CD8-positive, alpha-beta T cell (primary cell): ENCODE measurements at regions of chr7 and their contacts with region 1.

Region 1: DNA sequence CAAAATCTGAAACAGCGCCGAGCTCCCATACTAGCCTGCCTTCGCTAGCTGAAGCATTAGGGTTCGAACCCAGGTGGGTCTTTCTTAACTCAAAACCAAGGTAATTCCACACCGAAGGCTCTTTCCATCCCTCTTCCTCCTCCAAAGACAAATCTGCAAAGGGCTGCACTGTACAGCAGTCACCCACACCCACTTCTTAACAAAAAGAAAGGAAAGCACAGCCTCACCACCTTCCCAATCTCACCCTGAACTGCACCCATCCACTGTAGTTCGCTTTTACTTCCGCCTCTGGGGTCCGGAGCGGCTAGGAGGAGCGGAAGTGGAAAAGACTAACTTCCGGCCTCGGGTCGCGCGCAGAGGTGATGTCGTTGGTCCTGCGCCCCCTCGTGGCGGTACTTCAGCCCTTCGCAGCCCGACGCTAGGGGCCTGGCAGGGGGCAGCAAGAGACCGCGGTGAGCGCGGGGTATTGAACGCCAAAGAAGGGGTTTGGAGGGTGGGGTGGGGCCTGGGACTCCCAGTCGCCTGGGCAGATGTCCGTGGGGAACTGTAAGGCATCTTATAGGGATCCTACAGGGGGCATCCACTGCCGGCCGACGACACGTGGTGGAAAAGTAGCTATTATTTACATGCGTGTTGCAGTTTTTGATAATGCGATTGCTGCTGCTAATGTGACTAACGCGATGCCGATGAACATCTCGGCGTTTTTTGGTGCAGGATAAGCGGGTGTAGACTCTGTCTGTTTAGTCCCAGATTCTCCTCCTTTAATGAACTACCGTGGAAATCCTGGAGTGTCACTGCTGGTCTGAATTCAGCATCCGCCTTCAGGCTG is at the start of gene MTERF1:
- DNase-seq: peak; percentile 82 to 96 (median 95)
- ATAC-seq: peak; percentile 96
- H3K4me3 ChIP-seq: peak within 1 kb of the TSS; percentile 78 to 90
- H3K4me3 Mint-ChIP-seq: peak within 1 kb of the TSS; percentile 94
- H3K27ac ChIP-seq: peak within 1 kb of the TSS; percentile 63 to 77
- H3K27ac Mint-ChIP-seq: peak within 1 kb of the TSS; percentile 97
- H3K4me1 ChIP-seq: peaks cover 21% of the 10 kb centered on the region
- H3K4me1 Mint-ChIP-seq: peaks cover 40% of the 10 kb centered on the region
- H3K27me3 ChIP-seq: no peaks in the 10 kb centered on the region
- H3K27me3 Mint-ChIP-seq: no peaks in the 10 kb centered on the region
- CTCF ChIP-seq: peak; percentile 97
- total RNA-seq, gene MTERF1: 12.3 to 12.5 TPM

Region 2: DNA sequence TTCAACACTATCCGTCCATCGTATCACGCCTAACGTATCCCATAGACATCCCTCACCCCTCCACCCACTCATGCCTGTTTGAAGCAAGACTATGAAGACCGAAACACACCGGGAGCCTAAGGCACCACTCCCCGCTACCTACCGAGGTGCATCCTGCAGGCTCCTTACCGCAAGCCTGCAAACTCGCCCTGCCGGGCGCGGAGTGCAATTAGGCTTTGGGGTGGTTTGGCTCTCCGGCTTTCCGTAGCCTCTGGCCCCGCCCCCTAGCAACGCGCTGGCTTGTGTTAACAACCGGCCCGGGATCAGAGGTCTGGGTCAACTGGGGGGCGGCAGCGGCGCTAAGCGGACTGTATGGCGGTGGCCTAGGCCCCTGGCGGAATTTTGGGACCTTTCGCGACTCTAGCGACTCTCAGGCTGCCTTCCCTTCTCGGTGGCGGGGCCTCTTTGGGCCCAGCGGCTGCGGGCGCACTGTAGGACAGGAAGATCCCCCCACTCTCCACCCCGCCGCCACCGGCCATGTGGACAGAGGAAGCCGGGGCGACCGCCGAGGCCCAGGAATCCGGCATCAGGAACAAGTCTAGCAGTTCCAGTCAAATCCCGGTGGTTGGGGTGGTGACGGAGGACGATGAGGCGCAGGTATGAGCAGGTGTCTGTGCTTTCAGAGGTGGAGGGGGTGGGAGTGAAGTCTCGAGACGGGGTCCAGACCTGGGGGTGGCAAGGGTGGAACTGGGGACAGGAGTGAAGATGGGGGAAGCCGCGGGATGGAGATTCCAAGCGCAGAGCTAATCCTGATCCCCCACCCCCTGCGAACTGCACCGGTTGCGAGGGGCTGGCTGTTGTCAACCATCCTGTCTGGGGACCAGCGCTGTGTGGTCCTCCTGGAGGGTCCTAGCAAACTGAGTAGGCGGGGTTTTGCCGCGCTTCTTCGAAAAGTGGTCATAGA is 1635.4 kb before region 1 on chr7 and contains the start of gene CFAP69:
- CTCF ChIA-PET with region 1: no interaction called
- POLR2A ChIA-PET with region 1: no interaction called
- intact Hi-C with region 1: loop called in 1 of 2 experiments (anchors 5 kb)
- DNase-seq: peak; percentile 71 to 90 (median 84)
- ATAC-seq: peak; percentile 86
- H3K4me3 ChIP-seq: peak within 1 kb of the TSS; percentile 78 to 83
- H3K4me3 Mint-ChIP-seq: peak within 1 kb of the TSS; percentile 92
- H3K27ac ChIP-seq: peak within 1 kb of the TSS in 1 of 2 experiments; percentile 54
- H3K27ac Mint-ChIP-seq: no peak within 1 kb of the TSS
- H3K4me1 ChIP-seq: peaks cover 3% of the 10 kb centered on the region
- H3K4me1 Mint-ChIP-seq: peaks cover 22% of the 10 kb centered on the region
- H3K27me3 ChIP-seq: peaks cover 0 to 9% of the 10 kb centered on the region in 2 experiments
- H3K27me3 Mint-ChIP-seq: peaks cover 54% of the 10 kb centered on the region
- CTCF ChIP-seq: peak; percentile 19
- total RNA-seq, gene CFAP69: not detected

Region 3: GRCh38 chr7:90945104-90945787 is 935.4 kb before region 1 on chr7:
- CTCF ChIA-PET with region 1: no interaction called
- POLR2A ChIA-PET with region 1: no interaction called
- intact Hi-C with region 1: no loop called
- DNase-seq: no peak
- ATAC-seq: no peak
- H3K4me3 ChIP-seq: no peak overlapping the region
- H3K4me3 Mint-ChIP-seq: no peak overlapping the region
- H3K27ac ChIP-seq: no peak overlapping the region
- H3K27ac Mint-ChIP-seq: no peak overlapping the region
- H3K4me1 ChIP-seq: no peaks in the 10 kb centered on the region
- H3K4me1 Mint-ChIP-seq: no peaks in the 10 kb centered on the region
- H3K27me3 ChIP-seq: no peaks in the 10 kb centered on the region
- H3K27me3 Mint-ChIP-seq: no peaks in the 10 kb centered on the region
- CTCF ChIP-seq: no peak

Region 4: GRCh38 chr7:91826377-91826776 is 54.2 kb before region 1 on chr7:
- CTCF ChIA-PET with region 1: interaction called, 9 read pairs
- POLR2A ChIA-PET with region 1: no interaction called
- intact Hi-C with region 1: loop called in 1 of 2 experiments (anchors 1 kb)
- DNase-seq: no peak
- ATAC-seq: no peak
- H3K4me3 ChIP-seq: no peak overlapping the region
- H3K4me3 Mint-ChIP-seq: no peak overlapping the region
- H3K27ac ChIP-seq: no peak overlapping the region
- H3K27ac Mint-ChIP-seq: no peak overlapping the region
- H3K4me1 ChIP-seq: no peaks in the 10 kb centered on the region
- H3K4me1 Mint-ChIP-seq: no peaks in the 10 kb centered on the region
- H3K27me3 ChIP-seq: no peaks in the 10 kb centered on the region
- H3K27me3 Mint-ChIP-seq: no peaks in the 10 kb centered on the region
- CTCF ChIP-seq: no peak

Region 5: DNA sequence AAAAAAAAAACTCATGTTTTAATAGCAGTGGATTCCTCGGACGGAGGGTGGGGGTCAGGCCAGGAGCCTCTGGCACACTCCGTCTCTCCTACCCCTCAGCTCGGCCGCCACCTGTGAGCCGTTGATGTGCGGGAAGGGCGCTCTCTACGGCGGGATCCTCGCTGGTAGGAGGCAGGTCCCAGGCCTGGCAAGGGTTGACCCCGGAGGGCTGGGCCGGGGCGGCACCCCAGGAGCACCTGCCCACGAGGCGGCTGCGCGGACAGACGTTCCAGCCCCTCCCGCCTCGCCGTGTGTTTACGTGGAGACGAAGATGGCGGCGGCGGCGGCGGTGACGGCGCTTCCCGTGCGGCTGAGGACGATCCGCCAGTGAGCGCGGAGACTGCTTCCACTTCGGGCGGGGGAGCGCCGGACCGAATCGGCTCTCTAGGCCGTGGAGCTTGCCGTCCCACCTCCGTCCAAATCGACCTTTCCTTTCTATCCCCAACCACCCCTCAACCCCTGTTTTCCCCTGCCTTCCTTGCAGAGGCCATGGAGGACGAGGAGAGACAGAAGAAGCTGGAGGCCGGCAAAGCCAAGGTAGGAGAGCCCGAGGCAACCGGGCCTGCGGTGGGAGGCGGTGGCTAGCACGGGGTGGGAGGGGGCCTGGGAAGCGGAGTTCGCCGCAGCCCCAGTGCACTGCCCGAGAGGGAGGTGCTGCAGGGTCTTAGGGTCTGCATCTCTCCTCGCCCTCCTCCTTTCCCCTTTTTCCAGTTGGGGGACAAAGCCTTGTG is 60.1 kb after region 1 on chr7 and contains the start of gene AKAP9:
- CTCF ChIA-PET with region 1: interaction called, 18 read pairs
- POLR2A ChIA-PET with region 1: interaction called, 24 read pairs
- intact Hi-C with region 1: loop called (anchors 1 kb)
- DNase-seq: peak; percentile 71 to 93 (median 89)
- ATAC-seq: peak; percentile 84
- H3K4me3 ChIP-seq: peak within 1 kb of the TSS; percentile 78 to 92
- H3K4me3 Mint-ChIP-seq: peak within 1 kb of the TSS; percentile 93
- H3K27ac ChIP-seq: peak within 1 kb of the TSS; percentile 91 to 93
- H3K27ac Mint-ChIP-seq: peak within 1 kb of the TSS; percentile 96
- H3K4me1 ChIP-seq: peaks cover 21% of the 10 kb centered on the region
- H3K4me1 Mint-ChIP-seq: peaks cover 45% of the 10 kb centered on the region
- H3K27me3 ChIP-seq: no peaks in the 10 kb centered on the region
- H3K27me3 Mint-ChIP-seq: no peaks in the 10 kb centered on the region
- CTCF ChIP-seq: no peak
- total RNA-seq, gene AKAP9: 61.2 to 61.3 TPM

Region 6: DNA sequence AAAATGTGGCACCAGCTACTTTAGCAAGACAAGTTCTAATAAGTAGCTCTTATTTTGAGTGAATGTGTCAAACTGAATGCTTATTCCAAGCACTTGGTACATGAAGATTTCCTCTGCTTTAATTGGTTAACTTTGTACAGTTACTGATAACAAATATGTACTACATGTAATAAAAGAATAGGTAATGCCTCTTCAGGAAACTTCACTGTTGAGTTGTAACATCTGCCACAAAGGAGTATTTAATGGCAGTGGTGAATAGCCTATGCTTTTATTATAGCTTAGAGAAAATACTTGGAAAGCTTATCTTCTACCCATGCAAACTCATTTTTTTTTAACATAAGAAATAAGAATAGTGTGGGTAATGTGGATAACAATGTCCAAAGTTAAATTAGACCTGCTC is 171.0 kb after region 1 on chr7:
- CTCF ChIA-PET with region 1: no interaction called
- POLR2A ChIA-PET with region 1: no interaction called
- intact Hi-C with region 1: no loop called
- DNase-seq: no peak
- ATAC-seq: no peak
- H3K4me3 ChIP-seq: no peak overlapping the region
- H3K4me3 Mint-ChIP-seq: no peak overlapping the region
- H3K27ac ChIP-seq: no peak overlapping the region
- H3K27ac Mint-ChIP-seq: no peak overlapping the region
- H3K4me1 ChIP-seq: no peaks in the 10 kb centered on the region
- H3K4me1 Mint-ChIP-seq: peaks cover 6% of the 10 kb centered on the region
- H3K27me3 ChIP-seq: no peaks in the 10 kb centered on the region
- H3K27me3 Mint-ChIP-seq: no peaks in the 10 kb centered on the region
- CTCF ChIP-seq: no peak

Region 7: GRCh38 chr7:92245487-92246362 is 365.1 kb after region 1 on chr7 and contains the starts of genes ANKIB1 and KRIT1:
- CTCF ChIA-PET with region 1: no interaction called
- POLR2A ChIA-PET with region 1: no interaction called
- intact Hi-C with region 1: loop called (anchors 2 kb)
- DNase-seq: peak; percentile 65 to 93 (median 88)
- ATAC-seq: peak; percentile 74
- H3K4me3 ChIP-seq: peak within 1 kb of the TSS; percentile 86 to 90
- H3K4me3 Mint-ChIP-seq: peak within 1 kb of the TSS; percentile 98
- H3K27ac ChIP-seq: peak within 1 kb of the TSS; percentile 93 to 98
- H3K27ac Mint-ChIP-seq: peak within 1 kb of the TSS; percentile 99
- H3K4me1 ChIP-seq: peaks cover 29% of the 10 kb centered on the region
- H3K4me1 Mint-ChIP-seq: peaks cover 52% of the 10 kb centered on the region
- H3K27me3 ChIP-seq: no peaks in the 10 kb centered on the region
- H3K27me3 Mint-ChIP-seq: no peaks in the 10 kb centered on the region
- CTCF ChIP-seq: no peak
- total RNA-seq, gene ANKIB1: 51.1 to 59.6 TPM
- total RNA-seq, gene KRIT1: 25.0 to 27.0 TPM

Region 8: GRCh38 chr7:92590711-92591310 is 710.2 kb after region 1 on chr7:
- CTCF ChIA-PET with region 1: no interaction called
- POLR2A ChIA-PET with region 1: no interaction called
- intact Hi-C with region 1: loop called (anchors 2 kb)
- DNase-seq: peak in 1 of 9 experiments; percentile 11
- ATAC-seq: no peak
- H3K4me3 ChIP-seq: peak overlapping the region; percentile 71 to 74
- H3K4me3 Mint-ChIP-seq: peak overlapping the region; percentile 96
- H3K27ac ChIP-seq: no peak overlapping the region
- H3K27ac Mint-ChIP-seq: no peak overlapping the region
- H3K4me1 ChIP-seq: peaks cover 32% of the 10 kb centered on the region
- H3K4me1 Mint-ChIP-seq: peaks cover 46% of the 10 kb centered on the region
- H3K27me3 ChIP-seq: no peaks in the 10 kb centered on the region
- H3K27me3 Mint-ChIP-seq: no peaks in the 10 kb centered on the region
- CTCF ChIP-seq: no peak